Activated naive CD4-positive, alpha-beta T cell treated with anti-CD3 and anti-CD28 coated beads for 36 hours (primary cell): ENCODE measurements at regions of chr20 and their contacts with region 1.

Region 1: GRCh38 chr20:45293041-45294002 is 13.3 kb upstream of the RBPJL start:
- DNase-seq: peak; percentile 90
- H3K4me3 Mint-ChIP-seq: peak overlapping the region; percentile 72
- H3K27ac Mint-ChIP-seq: no peak overlapping the region
- H3K4me1 Mint-ChIP-seq: peaks cover 4% of the 10 kb centered on the region
- H3K27me3 Mint-ChIP-seq: peaks cover 33% of the 10 kb centered on the region

Region 2: GRCh38 chr20:44966030-44966961 is 327.0 kb before region 1 on chr20 and contains the start of gene STK4:
- CTCF ChIA-PET with region 1: no interaction called
- intact Hi-C with region 1: loop called (anchors 5 kb)
- DNase-seq: peak; percentile 96
- H3K4me3 Mint-ChIP-seq: peak within 1 kb of the TSS; percentile 88
- H3K27ac Mint-ChIP-seq: peak within 1 kb of the TSS; percentile 98
- H3K4me1 Mint-ChIP-seq: peaks cover 56% of the 10 kb centered on the region
- H3K27me3 Mint-ChIP-seq: no peaks in the 10 kb centered on the region
- total RNA-seq, gene STK4: 110 to 116 TPM

Region 3: DNA sequence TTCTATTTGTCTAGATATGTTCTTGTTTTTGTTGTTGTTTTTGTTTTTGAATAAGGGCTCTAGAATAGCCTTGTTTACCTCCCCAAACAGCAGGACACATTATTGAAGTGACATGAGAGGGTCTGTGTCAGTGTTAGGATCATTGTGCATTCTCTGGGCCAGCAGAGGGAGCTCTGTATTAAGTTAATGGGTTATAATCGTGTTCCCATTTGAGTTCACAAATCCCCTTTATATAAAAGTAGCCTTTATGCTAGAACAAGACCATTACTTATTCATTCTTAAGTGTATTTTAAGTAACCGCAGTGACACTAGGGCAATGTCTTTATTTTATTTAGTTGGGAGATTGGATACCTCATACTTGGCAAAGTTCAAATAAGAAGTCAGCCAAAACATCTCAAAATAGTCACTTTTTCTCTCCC is 282.2 kb before region 1 on chr20:
- CTCF ChIA-PET with region 1: interaction called, 4 read pairs
- intact Hi-C with region 1: loop called (anchors 5 kb)
- DNase-seq: peak; percentile 75
- H3K4me3 Mint-ChIP-seq: no peak overlapping the region
- H3K27ac Mint-ChIP-seq: no peak overlapping the region
- H3K4me1 Mint-ChIP-seq: peaks cover 47% of the 10 kb centered on the region
- H3K27me3 Mint-ChIP-seq: no peaks in the 10 kb centered on the region

Region 4: DNA sequence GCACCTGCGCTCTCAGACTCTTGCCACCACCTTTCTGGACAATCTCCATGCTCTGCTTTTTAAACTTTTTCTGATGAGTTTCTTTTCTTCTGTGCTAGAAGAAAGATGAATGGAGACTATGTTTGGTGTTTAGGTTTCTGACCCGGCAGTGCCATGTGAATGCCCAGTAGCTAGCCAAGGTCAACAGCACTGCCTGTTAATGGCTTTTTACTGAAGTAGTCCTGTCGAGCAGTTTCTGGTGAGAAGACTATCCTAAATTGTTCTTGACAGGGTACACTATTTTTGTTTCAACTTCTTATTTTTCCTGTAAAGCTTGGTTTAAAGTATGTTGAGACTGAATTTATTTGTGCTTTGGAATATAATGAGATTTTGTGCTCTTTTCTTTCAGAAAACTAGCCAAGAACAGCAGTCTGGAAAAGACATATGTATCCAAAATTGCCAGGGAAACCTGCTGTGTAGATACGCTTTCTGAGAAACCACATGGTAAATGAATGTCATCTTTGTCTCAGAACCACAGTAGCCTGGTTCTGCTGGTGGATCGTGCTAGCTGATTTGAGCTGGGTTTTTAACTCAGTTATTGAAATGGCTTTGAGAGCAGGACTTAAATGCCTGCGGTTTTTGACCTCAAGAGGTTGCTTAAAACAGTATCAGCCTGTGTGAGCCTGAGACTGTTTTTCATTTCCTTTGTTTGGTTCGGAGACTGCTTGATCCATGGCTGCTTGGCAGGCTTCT is 240.5 kb before region 1 on chr20:
- CTCF ChIA-PET with region 1: interaction called, 10 read pairs
- intact Hi-C with region 1: no loop called
- DNase-seq: peak; percentile 20
- H3K4me3 Mint-ChIP-seq: no peak overlapping the region
- H3K27ac Mint-ChIP-seq: peak overlapping the region; percentile 80
- H3K4me1 Mint-ChIP-seq: peaks cover 80% of the 10 kb centered on the region
- H3K27me3 Mint-ChIP-seq: no peaks in the 10 kb centered on the region

Region 5: DNA sequence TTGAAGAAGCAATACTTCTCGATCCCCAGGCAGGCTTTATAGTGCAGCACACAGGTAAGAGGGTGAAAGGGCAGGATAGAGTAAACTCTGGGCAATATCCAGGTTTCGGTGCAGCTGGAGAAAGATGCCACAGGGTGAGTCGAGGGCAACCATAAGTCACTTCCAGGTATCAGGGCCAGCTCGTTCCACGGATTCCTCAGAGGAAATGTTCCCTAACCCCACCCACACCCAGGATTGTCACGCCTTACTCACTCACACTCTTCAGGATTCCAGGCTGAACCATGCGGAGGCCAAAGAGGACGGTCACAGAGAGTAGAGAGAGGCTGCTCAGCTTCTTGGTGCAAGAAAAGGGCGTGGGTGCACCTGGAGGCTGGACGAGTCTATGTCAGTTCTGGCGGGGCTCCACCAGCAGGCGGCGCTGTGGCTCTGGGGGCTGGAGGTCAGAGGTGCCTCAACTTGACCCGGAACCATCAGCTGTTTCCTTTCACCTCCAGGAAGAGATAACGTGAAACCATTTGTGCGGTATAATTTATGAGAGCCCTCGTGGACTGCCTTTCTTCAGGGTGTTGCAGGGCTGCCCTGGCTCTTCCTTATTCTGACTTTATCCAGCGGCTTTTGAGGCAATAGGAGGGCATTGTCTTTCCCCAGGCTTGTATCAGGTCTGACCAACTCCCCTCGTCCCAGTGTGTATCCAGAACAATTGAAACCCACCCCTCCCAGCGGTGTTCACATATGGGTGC is 154.6 kb before region 1 on chr20:
- CTCF ChIA-PET with region 1: interaction called, 62 read pairs
- intact Hi-C with region 1: loop called (anchors 1 kb)
- DNase-seq: peak; percentile 88
- H3K4me3 Mint-ChIP-seq: no peak overlapping the region
- H3K27ac Mint-ChIP-seq: no peak overlapping the region
- H3K4me1 Mint-ChIP-seq: no peaks in the 10 kb centered on the region
- H3K27me3 Mint-ChIP-seq: peaks cover 7% of the 10 kb centered on the region

Region 6: GRCh38 chr20:45174434-45175364 is 118.6 kb before region 1 on chr20 and contains the start of gene PI3:
- CTCF ChIA-PET with region 1: no interaction called
- intact Hi-C with region 1: no loop called
- DNase-seq: no peak
- H3K4me3 Mint-ChIP-seq: no peak within 1 kb of the TSS
- H3K27ac Mint-ChIP-seq: no peak within 1 kb of the TSS
- H3K4me1 Mint-ChIP-seq: no peaks in the 10 kb centered on the region
- H3K27me3 Mint-ChIP-seq: peaks cover 4% of the 10 kb centered on the region
- total RNA-seq, gene PI3: not detected

Region 7: DNA sequence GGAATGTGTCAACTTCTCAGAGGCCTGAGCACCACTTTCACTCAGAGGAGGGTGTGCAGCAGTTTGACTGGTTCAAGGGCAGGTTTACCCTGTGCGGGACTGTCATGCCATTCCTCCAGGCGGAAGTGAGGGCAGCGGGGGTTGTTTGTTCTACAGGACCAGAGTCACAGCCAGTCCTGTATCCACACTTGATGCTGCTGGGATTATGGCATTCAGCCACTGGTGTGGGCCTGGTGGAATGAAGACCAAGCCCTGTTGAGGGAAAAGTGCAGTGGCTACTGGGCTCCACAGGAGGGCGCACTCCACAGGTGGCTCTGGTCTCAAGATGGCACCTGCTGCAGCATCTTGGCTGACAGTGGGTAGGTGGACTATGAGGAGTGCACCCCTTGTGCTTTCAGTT is 57.3 kb before region 1 on chr20:
- CTCF ChIA-PET with region 1: interaction called, 4 read pairs
- intact Hi-C with region 1: loop called (anchors 2 kb)
- DNase-seq: no peak
- H3K4me3 Mint-ChIP-seq: no peak overlapping the region
- H3K27ac Mint-ChIP-seq: no peak overlapping the region
- H3K4me1 Mint-ChIP-seq: no peaks in the 10 kb centered on the region
- H3K27me3 Mint-ChIP-seq: peaks cover 34% of the 10 kb centered on the region

Region 8: DNA sequence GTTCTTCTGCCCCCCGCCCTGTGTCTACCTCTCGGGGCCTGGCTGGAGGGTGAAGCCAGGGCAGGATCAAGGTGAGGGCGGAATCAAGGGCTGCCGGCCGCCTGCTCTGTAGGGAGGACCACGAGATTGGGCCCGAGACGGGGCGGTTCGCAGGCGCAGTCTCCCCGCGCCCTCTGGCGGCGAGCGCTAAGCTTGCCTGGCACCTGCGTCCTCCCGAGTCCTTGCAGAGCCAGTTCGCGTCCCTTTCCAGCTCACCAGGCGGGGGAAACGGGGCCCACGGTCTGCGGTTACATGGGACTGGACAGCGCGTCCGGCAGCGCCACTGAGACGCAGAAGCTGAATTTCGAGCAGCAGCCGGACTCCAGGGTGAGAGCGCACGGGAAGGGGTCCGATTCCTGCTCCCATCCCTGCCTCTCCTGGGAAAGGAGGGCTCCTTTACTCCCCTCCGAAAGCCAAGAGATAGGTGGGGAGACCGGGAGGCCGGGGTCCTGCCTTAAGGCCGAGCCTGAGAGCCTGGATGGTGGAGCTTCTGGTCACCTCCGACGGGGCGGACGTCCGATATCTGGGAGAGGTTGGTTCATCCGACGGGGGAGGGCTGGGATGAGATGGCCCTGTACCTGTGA is 18.4 kb after region 1 on chr20:
- CTCF ChIA-PET with region 1: interaction called, 31 read pairs
- intact Hi-C with region 1: no loop called
- DNase-seq: peak; percentile 73
- H3K4me3 Mint-ChIP-seq: no peak overlapping the region
- H3K27ac Mint-ChIP-seq: no peak overlapping the region
- H3K4me1 Mint-ChIP-seq: peaks cover 10% of the 10 kb centered on the region
- H3K27me3 Mint-ChIP-seq: peaks cover 54% of the 10 kb centered on the region